ENCODE measurements at regions of chr1 and their contacts with region 1.

Region 1: GRCh38 chr1:1906185-1907097 is 8.6 kb upstream of the CALML6 start:
- DNase-seq: peak; percentile 77

Region 2: GRCh38 chr1:1788646-1789431 is 117.6 kb before region 1 on chr1:
- CTCF ChIA-PET with region 1: interaction called, 11 read pairs
- POLR2A ChIA-PET with region 1: interaction called, 3 read pairs
- DNase-seq: peak; percentile 34

Region 3: DNA sequence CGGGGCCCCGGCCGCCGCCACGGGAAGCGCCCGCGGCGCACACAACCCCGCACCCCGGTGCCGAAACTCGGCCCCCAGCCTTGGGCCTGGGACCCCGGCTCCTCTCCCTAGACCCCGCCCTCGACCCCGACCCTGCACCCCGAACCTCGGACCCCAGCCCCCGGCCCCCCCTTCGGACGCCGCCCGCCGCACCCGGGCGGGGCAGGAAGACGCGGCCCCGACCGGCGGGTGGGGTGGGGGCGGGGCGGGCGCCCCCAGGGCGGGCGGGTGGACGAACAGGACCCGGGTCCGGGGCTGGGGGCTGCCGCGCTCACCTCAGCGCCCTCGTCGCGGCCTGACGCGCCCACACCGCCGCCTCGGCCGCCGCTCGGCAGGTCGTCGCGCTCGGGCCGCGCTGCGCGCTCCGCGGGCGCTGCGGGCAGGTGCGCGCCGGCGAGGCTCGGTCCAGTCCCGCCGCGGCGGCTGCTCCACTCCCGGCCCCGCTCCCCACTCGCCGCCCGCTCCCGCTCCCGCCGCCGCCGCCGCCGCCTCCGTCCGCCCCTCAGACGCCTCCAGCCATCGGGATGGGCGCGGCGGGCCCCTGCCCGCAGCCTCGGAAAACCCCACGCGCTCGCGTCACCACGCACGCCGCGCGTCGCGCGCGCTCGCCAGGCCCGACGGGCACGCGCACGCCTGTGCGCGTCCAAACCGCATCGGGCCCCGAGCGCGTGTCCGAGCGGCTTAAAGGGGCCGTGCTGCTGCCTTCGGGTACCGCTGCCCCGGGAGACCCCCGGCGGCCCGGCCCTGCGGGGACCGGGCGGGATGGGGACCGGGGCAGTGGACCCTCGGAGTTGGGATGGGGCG is 15.7 kb before region 1 on chr1 and contains the start of gene GNB1:
- CTCF ChIA-PET with region 1: interaction called, 5 read pairs
- POLR2A ChIA-PET with region 1: interaction called, 11 read pairs
- DNase-seq: peak; percentile 94

Region 4: GRCh38 chr1:1954831-1955441 is 48.5 kb after region 1 on chr1:
- CTCF ChIA-PET with region 1: no interaction called
- POLR2A ChIA-PET with region 1: no interaction called
- DNase-seq: peak; percentile 58

Measured in HEK293T (cell line).